BJ (cell line): ENCODE measurements at regions of chr4 and their contacts with region 1.

Region 1: DNA sequence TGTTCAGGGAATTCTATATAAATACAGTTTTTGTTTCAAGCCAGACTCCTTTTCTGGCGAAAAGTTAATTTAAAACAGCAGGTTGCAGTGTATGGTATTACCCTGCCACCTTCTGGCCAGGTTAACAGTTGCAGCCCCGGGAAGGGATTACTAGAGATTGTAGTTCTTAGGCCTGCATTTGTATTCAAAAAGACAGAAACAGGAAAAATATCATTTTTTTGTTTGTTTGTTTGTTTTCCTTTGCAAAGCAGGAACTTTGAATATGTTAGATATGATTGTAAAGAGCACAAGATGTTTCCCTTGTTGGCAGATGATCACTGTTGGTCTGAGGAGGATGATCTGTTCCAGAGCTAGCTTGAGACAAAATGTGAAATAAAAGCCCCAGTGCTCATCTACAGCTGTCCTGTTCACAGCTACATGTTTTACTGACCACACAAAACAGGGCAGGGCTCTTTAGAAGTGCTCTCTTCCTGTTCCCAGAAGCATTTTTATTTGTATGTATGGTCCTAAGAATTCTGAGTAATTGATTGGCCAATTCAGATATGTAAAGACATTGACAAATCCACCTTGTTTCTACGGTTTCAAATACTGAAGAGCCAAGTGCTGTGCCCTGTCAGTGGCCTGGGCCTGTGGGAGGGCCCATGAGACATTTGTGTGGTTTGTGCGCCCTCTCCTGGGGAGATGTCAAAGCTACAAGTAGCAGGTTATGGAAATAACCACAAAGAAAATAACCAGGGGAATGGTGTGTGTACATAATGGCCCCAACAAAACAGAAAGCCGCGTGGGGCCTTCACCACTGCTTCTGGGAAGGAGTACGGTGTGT is 57.9 kb downstream of the CLDN22 start:
- DNase-seq: no peak
- H3K4me3 ChIP-seq: no peak overlapping the region
- H3K27me3 ChIP-seq: no peaks in the 10 kb centered on the region
- CTCF ChIP-seq: peak; percentile 85

Region 2: GRCh38 chr4:182938205-182938645 is 323.9 kb before region 1 on chr4:
- CTCF ChIA-PET with region 1: interaction called, 146 read pairs
- POLR2A ChIA-PET with region 1: no interaction called
- DNase-seq: no peak
- H3K4me3 ChIP-seq: no peak overlapping the region
- H3K27me3 ChIP-seq: peaks cover 6% of the 10 kb centered on the region
- CTCF ChIP-seq: peak; percentile 96

Region 3: DNA sequence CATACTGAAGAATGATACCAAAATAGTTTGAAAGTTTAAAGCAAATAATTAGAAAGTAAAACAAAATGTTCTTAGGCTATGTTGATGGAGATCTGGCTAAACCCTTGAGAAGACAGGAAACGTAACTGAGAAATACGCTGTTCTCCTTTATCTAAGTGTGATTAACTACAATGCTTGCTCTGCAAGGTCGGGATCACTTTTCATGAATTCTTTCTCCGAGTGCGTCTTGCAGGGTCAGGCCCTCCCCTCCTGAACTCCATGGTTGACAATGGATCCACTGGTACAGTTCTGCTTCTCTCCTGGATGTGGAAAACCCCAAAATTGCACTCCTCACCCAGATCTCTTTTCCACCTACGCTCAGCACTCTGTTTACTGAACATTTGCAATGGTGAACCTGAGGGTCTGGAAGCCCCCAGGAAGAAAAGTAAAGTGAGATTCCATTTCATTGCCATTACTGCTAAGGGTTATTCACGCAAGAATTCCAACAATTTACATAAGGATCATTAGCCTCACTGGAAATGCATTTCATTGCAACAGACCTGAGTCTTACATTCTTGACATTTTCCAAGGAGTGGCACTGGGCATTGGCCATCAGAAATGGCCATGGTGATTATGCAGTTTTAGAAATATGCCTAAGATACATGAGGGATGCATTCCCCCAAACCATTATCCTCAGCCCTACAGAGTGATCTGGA is 187.7 kb before region 1 on chr4:
- CTCF ChIA-PET with region 1: interaction called, 183 read pairs
- POLR2A ChIA-PET with region 1: no interaction called
- DNase-seq: no peak
- H3K4me3 ChIP-seq: no peak overlapping the region
- H3K27me3 ChIP-seq: no peaks in the 10 kb centered on the region
- CTCF ChIP-seq: no peak

Region 4: DNA sequence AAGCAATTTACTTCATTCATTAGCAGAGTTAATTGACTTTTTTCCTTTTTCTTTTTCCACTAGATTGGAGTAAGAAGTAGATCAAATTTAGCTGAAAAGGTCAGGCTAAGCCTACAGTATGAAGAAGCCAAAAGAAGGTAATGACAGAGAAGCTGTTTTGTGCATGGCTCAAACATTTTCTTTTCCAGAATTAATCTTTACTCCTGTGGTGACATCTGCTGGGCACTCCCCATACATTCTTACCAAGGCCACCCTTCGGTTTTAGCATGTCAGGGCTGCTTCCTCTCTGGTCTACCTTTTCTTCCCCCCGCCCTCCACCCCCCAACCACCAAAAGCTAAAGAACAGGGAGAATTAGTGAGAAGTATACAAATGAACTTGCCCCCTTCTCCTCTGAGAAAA is 12.3 kb before region 1 on chr4:
- CTCF ChIA-PET with region 1: interaction called, 20 read pairs
- POLR2A ChIA-PET with region 1: no interaction called
- DNase-seq: no peak
- H3K4me3 ChIP-seq: no peak overlapping the region
- H3K27me3 ChIP-seq: no peaks in the 10 kb centered on the region
- CTCF ChIP-seq: peak; percentile 47

Region 5: DNA sequence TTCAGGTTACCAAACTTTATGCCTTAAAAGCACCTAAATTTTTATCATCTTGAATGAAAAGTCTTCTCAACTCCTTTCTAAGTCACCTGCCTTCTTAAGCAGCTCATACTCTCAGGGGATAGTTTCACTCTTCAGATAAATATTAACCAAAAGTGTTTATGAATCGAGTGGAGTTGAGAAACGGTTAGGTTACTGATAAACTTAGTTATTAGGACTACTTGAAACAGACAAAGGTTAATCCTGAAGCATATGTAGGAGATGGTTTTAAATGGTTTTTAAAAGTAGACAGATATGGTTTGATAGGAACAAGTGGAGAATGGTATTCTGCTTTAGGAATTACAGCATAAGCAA is 25.1 kb after region 1 on chr4:
- CTCF ChIA-PET with region 1: no interaction called
- POLR2A ChIA-PET with region 1: no interaction called
- DNase-seq: no peak
- H3K4me3 ChIP-seq: no peak overlapping the region
- H3K27me3 ChIP-seq: no peaks in the 10 kb centered on the region
- CTCF ChIP-seq: no peak